Right ventricle myocardium inferior (tissue), 1 donor: ENCODE measurements at regions of chr7 and their contacts with region 1.

Region 1: DNA sequence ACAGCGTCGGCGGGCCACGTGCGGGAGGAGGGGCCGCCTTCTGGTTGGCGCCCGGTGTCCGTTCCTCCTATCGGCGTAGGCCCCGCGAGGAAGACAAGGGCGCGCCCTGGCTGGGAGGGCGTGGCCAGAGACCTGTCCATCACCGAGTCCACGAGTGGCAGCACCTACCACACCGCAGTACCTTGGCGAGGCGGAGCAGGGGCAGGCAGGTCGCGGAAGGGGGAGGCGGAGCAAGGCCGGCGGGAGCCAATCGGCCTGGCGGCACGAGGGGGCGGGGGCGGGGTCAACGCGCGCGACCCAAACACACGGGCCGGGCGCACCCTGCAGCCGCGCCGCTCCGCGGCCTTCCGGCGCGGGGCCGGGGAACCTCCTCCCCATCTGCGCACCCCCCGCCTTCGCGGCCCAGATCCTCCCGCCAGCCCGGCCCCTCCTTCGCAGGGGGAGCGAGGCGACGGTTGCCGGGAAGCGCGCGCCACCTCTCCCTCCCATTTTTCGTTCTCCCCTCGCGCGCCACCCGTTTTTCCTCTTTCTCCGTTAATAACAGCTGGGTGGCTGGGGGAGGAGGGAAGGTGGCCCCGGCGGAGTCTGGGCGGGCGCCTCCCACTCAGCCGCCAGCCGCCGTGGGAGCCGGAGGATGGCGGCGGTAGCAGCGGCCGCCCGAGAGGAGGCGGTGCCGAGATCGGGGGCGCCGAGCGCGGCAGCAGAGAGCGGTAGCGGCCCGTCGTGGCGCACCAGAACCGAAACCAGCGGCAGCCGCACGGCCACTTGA is at the start of gene ZNRF2:
- DNase-seq: peak; percentile 99
- ATAC-seq: peak; percentile 97
- total RNA-seq, gene ZNRF2: 8.7 TPM

Region 2: DNA sequence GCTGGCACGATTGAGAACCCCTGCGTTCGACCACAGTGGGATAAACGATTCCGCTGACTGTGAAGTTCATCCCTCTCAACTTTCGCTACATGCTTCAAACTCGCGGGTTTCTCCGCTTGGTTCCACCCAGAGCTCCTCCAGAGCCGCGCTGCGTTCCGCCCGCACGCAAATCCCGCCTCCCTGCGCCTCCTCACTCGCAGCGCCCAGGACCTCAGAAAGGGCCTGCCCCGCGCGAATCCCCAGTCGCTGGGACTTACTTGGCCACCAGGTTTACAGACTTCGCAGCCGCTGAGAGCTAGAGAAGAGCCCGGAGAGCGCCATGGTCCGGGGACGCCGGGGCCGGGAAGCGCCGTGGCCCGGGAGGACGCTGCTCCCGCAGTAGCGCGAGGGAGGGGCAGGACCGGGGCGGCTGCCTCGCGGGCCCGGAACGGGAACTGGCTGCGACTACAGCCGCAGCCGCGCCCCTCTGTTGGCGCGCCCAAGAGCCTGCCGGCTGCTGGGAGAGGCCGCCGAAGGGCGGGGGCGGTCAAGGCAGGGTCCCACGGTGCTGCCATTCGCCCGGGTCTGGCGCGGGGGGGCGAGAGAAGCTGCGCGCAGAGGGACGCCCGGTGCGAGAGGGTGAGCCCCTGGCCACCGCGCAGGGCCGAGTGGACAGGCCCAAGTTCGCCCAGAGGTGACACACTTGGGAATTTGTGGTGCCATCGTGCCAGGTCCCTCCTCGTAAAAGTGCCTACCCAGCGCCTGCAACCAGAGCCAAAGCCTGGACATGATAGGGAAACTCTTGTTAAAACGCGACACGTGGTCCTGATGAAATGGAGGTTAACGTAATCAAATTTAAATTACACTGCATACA is 194.1 kb after region 1 on chr7 and contains the start of gene NOD1:
- intact Hi-C with region 1: loop called (anchors 10 kb)
- DNase-seq: peak; percentile 93
- ATAC-seq: peak; percentile 93
- total RNA-seq, gene NOD1: 8.4 TPM